ENCODE measurements at regions of chr4 and their contacts with region 1.

Region 1: DNA sequence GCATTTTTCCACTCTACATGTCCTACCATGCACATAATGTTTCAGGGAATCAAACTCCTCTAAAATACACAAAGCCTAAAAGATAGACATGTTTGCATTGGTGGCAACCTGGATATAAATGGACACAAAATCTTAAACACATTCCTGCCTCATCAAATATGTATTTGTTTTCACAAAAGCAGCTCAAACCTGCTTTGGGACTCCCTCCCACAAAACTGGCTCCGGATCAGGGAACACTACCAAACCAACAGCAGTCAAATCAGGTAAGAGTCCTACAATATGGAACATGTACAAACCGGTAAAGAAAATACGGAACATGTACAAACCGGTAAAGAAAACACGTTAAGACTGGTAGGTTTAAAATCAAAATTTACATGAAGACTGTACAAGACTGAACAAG is 4.2 kb downstream of the AMTN start:
- DNase-seq: peak; percentile 81
- H3K4me3 Mint-ChIP-seq: no peak overlapping the region
- H3K27ac Mint-ChIP-seq: peak overlapping the region; percentile 49
- H3K4me1 Mint-ChIP-seq: peaks cover 30% of the 10 kb centered on the region
- H3K27me3 Mint-ChIP-seq: no peaks in the 10 kb centered on the region
- CTCF ChIP-seq: no peak

Region 2: DNA sequence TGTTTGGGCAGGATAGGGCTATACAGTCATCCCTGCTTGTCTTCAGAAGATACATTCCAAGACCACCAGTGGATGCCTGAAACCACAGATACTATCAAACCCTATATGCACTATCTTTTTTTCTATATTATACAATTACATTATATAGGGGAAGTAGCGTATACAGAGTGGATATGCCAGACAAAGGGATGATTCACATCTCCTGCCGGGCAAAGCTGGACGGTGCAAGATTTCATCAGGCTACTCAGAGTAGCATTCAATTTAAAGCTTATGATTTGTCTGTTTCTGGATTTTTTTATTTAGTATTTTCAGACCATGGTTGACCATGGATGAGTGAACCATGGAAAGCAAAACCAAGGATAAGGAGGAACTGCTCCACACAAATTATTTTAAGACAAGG is 11.2 kb before region 1 on chr4:
- CTCF ChIA-PET with region 1: interaction called, 13 read pairs
- POLR2A ChIA-PET with region 1: interaction called, 7 read pairs
- intact Hi-C with region 1: no loop called
- DNase-seq: peak; percentile 55
- H3K4me3 Mint-ChIP-seq: no peak overlapping the region
- H3K27ac Mint-ChIP-seq: no peak overlapping the region
- H3K4me1 Mint-ChIP-seq: peaks cover 12% of the 10 kb centered on the region
- H3K27me3 Mint-ChIP-seq: no peaks in the 10 kb centered on the region
- CTCF ChIP-seq: no peak